CD8-positive, alpha-beta T cell (primary cell): ENCODE measurements at regions of chr1 and their contacts with region 1.

Region 1: DNA sequence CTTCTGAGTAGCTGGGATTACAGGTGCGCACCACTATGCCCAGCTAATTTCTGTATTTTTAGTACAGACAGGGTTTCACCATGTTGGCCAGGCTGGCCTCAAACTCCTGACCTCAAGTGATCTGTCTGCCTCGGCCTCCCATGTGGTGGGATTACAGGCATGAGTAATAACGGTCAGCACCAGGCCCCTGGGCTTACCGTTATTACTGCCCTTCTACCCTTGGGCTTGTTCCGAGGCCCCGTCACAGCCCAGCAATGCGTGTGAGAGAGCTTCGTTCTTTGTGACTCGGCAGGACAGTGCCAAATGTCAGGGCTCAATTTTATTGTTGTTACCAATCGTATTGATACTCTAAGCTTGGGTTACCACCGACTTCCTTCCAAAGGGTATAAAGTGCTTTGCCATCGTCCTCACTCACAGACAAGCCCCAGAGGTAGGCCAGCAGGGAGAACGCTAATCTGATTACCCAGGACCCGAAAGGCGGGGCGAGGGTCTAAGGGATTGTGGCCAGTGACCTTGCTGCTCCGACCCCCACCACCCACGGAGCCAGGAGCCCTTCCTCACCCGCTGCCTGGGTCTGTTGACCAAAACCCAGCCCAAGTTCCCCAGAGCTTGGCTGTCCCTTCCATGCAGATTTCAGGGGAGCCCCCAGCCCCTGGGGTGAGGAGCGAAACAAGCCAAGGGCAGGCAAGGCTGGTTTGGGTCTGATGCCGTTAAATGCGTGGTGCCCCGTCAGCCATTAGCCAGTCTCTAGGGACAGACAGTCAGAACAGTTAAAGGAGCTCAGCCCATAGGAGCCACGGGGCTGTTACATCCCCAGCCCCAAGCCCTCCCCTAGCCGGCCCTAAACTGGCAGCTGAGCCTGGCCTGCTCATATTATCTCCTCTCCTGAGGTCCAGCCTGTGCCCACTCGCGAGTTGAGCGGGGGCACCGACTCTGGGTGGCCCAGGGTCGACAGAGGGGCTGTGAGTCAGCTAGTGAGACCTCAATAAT is 54.9 kb upstream of the CASZ1 start:
- DNase-seq: no peak
- ATAC-seq: no peak
- H3K4me3 ChIP-seq: no peak overlapping the region
- H3K4me3 Mint-ChIP-seq: no peak overlapping the region
- H3K27ac ChIP-seq: no peak overlapping the region
- H3K27ac Mint-ChIP-seq: no peak overlapping the region
- H3K4me1 ChIP-seq: no peaks in the 10 kb centered on the region
- H3K4me1 Mint-ChIP-seq: no peaks in the 10 kb centered on the region
- H3K27me3 ChIP-seq: peaks cover 0 to 2% of the 10 kb centered on the region in 2 experiments
- H3K27me3 Mint-ChIP-seq: peaks cover 6% of the 10 kb centered on the region
- CTCF ChIP-seq: no peak

Region 2: DNA sequence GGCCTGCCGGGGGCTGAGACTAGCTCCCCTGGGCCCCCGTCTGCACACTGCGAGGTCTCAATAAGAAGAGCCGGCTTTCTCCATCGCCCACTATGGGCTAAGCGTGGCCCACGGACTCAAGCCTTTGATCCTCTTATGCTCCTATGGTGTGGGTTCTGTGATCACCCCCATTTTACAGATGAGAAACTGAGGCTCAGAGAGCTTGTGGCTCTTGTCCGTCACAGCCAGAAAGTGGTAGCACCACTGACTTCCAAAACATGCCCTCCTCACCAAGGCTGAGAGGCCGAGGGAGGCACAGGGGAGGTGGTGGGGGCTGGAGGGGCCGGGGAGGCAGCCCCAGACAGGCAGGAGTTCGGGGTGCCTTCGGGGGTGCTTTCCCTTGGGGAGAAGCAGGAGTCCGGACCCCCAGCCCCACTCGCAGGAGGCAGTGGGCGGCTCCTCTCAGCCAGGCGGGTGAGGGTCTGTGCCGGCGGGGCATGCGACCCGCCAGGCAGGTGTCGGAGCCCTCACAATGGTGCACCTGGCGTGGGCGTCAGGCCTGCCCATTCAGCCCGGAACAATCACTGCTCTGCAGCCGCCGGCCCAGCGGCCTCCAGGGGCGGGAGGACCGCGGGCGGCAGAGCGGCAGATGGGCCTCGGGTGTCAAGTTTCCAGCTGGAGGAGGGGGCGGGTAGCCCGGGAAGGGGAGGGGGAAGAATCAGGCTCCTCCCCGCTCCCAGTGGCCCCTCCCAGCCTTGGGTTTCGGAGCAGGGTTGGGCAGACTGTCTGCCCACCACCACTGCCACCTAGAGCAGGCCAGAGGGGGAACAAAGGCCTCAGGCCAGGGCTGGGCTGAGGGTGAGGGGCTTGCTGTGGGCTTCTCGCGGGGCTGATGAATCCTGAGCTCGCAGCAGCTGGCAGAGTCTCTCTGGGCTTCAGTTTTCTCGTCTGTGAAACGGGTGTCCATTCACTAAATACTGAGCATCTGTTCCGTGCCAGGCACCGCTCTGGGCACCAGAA is 15.6 kb before region 1 on chr1:
- CTCF ChIA-PET with region 1: no interaction called
- POLR2A ChIA-PET with region 1: no interaction called
- intact Hi-C with region 1: no loop called
- DNase-seq: no peak
- ATAC-seq: no peak
- H3K4me3 ChIP-seq: no peak overlapping the region
- H3K4me3 Mint-ChIP-seq: no peak overlapping the region
- H3K27ac ChIP-seq: no peak overlapping the region
- H3K27ac Mint-ChIP-seq: no peak overlapping the region
- H3K4me1 ChIP-seq: no peaks in the 10 kb centered on the region
- H3K4me1 Mint-ChIP-seq: peaks cover 2% of the 10 kb centered on the region
- H3K27me3 ChIP-seq: peaks cover 0 to 7% of the 10 kb centered on the region in 2 experiments
- H3K27me3 Mint-ChIP-seq: peaks cover 39% of the 10 kb centered on the region
- CTCF ChIP-seq: no peak

Region 3: GRCh38 chr1:10874351-10874750 is 23.0 kb after region 1 on chr1:
- CTCF ChIA-PET with region 1: no interaction called
- POLR2A ChIA-PET with region 1: no interaction called
- intact Hi-C with region 1: loop called in 1 of 2 experiments (anchors 1 kb)
- DNase-seq: peak in 1 of 9 experiments; percentile 18
- ATAC-seq: no peak
- H3K4me3 ChIP-seq: no peak overlapping the region
- H3K4me3 Mint-ChIP-seq: no peak overlapping the region
- H3K27ac ChIP-seq: no peak overlapping the region
- H3K27ac Mint-ChIP-seq: no peak overlapping the region
- H3K4me1 ChIP-seq: no peaks in the 10 kb centered on the region
- H3K4me1 Mint-ChIP-seq: no peaks in the 10 kb centered on the region
- H3K27me3 ChIP-seq: peaks cover 0 to 4% of the 10 kb centered on the region in 2 experiments
- H3K27me3 Mint-ChIP-seq: peaks cover 20% of the 10 kb centered on the region
- CTCF ChIP-seq: no peak